Right ventricle myocardium inferior (tissue), 1 donor: ENCODE measurements at regions of chr16 and their contacts with region 1.

Region 1: DNA sequence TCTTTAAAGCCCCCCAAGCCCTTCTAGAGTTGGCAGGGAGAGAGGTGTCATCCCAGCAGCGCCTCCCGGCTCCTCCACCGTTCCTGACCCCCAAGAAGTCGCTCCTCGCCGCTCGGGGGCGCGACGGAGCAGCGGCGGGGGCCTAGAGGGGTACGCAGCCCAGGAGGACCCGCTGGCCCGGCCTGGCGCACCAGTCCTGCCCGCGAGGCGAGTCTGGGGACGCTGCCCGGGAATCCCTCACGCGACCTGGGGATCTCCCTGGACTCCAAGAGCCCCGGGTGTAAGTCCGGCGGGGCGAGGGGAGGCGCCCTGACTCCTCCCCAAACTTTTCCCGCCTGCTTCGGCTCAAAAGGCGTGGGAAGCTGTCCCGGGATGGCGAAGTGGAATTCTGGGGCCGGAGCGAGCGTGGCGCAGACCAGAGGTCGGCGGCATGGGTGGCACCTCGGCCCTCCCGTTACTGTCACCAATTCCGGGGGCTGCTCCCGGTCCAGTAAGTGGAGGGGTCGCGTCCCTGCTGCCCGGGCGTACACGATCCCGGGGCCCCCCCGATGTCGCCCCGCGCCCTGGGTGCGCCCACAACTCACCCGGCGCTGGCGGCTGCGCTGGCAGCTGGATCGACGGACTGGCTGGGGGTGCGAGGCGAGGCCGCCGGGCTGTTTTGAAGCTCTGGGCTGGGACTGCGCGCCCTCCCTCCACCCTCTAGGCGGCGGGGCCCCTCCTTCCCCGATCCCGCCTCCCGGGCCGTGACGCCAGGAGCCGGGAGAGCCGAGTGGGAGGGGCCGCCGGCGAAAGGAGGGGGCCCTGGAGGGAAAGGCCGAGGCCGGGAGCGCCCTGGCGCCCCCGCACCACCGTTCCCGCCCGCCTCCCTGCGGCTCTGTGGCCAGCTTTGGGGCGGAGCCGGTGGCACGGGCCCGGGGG is at the start of gene EMP2:
- DNase-seq: peak; percentile 88
- ATAC-seq: peak; percentile 85
- total RNA-seq, gene EMP2: 110 TPM

Region 2: DNA sequence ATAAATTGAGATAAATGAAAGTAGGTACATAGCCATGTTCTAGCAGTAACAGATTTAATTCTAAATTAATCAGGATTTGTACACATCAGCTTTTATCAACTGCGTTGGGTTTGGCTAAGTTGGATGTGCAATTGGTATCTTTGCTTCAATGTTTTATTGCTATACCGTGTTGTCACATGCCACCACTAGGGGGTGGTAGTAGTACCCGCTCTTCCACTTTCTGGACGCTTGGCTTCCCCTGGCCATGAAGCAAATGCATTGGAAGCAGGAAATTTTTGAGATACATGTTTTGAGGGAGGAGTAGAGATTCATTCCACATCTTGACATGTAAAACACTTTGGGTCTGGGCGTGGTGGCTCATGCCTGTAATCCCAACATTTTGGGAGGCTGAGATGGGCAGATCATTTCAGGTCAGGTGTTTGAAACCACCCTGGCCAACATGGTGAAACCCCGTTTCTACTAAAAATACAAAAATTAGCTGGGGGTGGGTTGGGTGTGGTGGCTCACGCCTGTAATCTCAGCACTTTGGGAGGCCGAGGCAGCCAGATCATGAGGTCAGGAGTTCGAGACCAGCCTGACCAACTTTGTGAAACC is 58.4 kb before region 1 on chr16:
- intact Hi-C with region 1: loop called (anchors 1 kb)
- DNase-seq: no peak
- ATAC-seq: peak; percentile 57

Region 3: GRCh38 chr16:10558746-10559641 is 21.2 kb before region 1 on chr16:
- intact Hi-C with region 1: loop called (anchors 1 kb)
- DNase-seq: peak; percentile 86
- ATAC-seq: peak; percentile 80

Region 4: GRCh38 chr16:10616730-10617555 is 36.7 kb after region 1 on chr16:
- intact Hi-C with region 1: loop called (anchors 1 kb)
- DNase-seq: peak; percentile 76
- ATAC-seq: peak; percentile 65

Region 5: GRCh38 chr16:10828851-10829731 is 248.9 kb after region 1 on chr16:
- intact Hi-C with region 1: loop called (anchors 5 kb)
- DNase-seq: peak; percentile 96
- ATAC-seq: peak; percentile 84